Mammary epithelial cell (primary cell): ENCODE measurements at regions of chr3 and their contacts with region 1.

Region 1: GRCh38 chr3:180855364-180855763 is 57.1 kb upstream of the FXR1 start:
- DNase-seq: peak; percentile 6
- H3K4me3 ChIP-seq: no peak overlapping the region
- H3K27ac ChIP-seq: no peak overlapping the region
- H3K4me1 ChIP-seq: no peaks in the 10 kb centered on the region
- H3K27me3 ChIP-seq: peaks cover 4% of the 10 kb centered on the region
- CTCF ChIP-seq: peak; percentile 22 to 66

Region 2: DNA sequence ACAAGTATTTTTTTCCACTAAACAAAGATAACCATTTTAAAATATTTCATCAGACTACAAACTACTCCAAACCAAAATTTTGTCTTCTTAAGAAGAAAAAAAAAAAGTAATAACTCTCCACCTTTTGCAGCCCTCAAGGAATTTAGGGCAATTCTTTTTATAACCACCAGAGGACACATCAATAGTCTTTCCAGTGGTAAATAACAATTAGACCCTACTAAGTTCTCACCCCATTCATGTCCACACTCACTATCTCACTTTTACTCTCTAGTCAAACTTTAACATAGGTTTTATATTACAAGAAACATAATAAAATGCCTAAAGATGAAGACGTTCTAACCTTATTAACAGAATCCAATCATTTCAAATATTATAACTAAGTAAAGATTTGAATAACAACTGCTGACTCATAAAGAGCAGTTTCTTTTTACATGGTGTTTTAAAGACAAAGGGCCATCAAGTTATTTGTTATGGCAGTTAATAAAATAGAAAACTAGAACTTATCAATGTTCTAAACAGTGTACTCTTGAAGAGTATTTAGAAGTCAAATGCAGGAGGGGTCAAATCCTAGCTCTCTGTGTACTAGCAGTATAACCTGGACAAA is 209.1 kb before region 1 on chr3:
- CTCF ChIA-PET with region 1: no interaction called
- dilution Hi-C with region 1: no loop called
- in situ Hi-C with region 1: no loop called
- intact Hi-C with region 1: loop called (anchors 10 kb)
- DNase-seq: no peak
- H3K4me3 ChIP-seq: no peak overlapping the region
- H3K27ac ChIP-seq: no peak overlapping the region
- H3K4me1 ChIP-seq: no peaks in the 10 kb centered on the region
- H3K27me3 ChIP-seq: peaks cover 6% of the 10 kb centered on the region
- CTCF ChIP-seq: peak; percentile 38 to 42

Region 3: GRCh38 chr3:180690061-180690460 is 165.3 kb before region 1 on chr3:
- CTCF ChIA-PET with region 1: no interaction called
- dilution Hi-C with region 1: no loop called
- in situ Hi-C with region 1: no loop called
- intact Hi-C with region 1: loop called (anchors 5 kb)
- DNase-seq: no peak
- H3K4me3 ChIP-seq: no peak overlapping the region
- H3K27ac ChIP-seq: no peak overlapping the region
- H3K4me1 ChIP-seq: no peaks in the 10 kb centered on the region
- H3K27me3 ChIP-seq: peaks cover 3% of the 10 kb centered on the region
- CTCF ChIP-seq: peak in 1 of 2 donors; percentile 31

Region 4: DNA sequence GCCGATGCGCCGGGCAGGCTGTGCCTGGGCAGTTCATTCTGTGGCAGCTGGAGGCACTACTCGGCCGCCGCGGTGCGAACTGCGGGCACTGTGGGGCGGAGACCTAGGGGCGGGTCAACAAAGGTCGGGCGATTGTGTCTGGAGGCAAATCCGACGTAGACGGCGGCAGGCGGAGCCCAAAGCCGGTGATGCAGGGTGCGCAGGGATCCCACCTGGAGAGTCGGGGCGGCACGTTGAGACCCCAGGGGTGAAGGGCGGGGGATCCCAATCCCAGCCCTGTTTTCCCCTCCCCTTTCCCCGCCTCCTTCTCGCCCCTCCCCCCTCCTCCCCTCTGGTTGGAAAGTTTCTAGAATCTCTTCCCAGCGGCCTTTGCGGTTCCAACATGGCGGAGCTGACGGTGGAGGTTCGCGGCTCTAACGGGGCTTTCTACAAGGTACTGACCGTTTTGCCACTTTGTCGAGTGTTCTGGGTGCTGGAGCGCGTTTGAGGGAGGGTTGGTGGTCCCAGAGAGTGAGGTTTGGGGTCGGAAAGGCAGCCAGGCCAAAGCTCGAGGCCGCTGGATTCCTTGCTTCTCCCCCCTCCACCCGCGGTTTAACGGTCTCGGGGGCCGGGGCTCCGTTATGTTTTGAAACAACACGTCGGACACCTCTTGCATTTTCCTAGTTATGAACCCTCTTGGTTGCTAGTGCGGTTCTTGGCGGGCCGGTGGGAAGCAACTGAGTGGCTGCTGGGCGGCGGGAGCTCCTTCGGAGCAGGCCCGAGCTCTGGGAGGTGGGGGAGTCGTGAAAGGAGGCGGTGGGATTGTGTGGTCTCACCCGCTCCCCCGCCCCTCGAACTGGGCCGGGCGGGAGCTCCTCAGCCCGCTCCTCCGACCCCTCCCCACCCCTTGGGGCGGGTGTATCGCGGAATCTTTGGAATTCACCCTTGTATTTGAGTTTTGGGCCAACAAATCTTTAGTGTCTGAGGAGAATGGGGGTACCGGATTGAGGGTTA is 57.2 kb after region 1 on chr3 and contains the start of gene FXR1:
- CTCF ChIA-PET with region 1: interaction called, 11 read pairs
- dilution Hi-C with region 1: no loop called
- in situ Hi-C with region 1: no loop called
- intact Hi-C with region 1: no loop called
- DNase-seq: peak; percentile 87
- H3K4me3 ChIP-seq: peak within 1 kb of the TSS; percentile 81 to 93 (median 92)
- H3K27ac ChIP-seq: peak within 1 kb of the TSS; percentile 90
- H3K4me1 ChIP-seq: peaks cover 19% of the 10 kb centered on the region
- H3K27me3 ChIP-seq: no peaks in the 10 kb centered on the region
- CTCF ChIP-seq: peak; percentile 62 to 83
- total RNA-seq, gene FXR1: 105 to 132 TPM